Endothelial cell of umbilical vein (primary cell): ENCODE measurements at regions of chr9 and their contacts with region 1.

Region 1: GRCh38 chr9:88388172-88388885 is at the start of gene SPIN1:
- DNase-seq: peak; percentile 66
- H3K4me3 ChIP-seq: peak within 1 kb of the TSS; percentile 83 to 98 (median 85)
- H3K27ac ChIP-seq: peak within 1 kb of the TSS; percentile 82
- H3K4me1 ChIP-seq: peaks cover 16% of the 10 kb centered on the region
- H3K27me3 ChIP-seq: no peaks in the 10 kb centered on the region
- CTCF ChIP-seq: peak; percentile 28 to 49
- POLR2A ChIP-seq: peak; percentile 81
- total RNA-seq, gene SPIN1: 56.8 and 58.4 TPM in 2 replicates

Region 2: GRCh38 chr9:87950765-87951488 is 437.4 kb before region 1 on chr9:
- CTCF ChIA-PET with region 1: no interaction called
- POLR2A ChIA-PET with region 1: no interaction called
- dilution Hi-C with region 1: no loop called
- intact Hi-C with region 1: loop called (anchors 5 kb)
- DNase-seq: peak; percentile 32
- H3K4me3 ChIP-seq: no peak overlapping the region
- H3K27ac ChIP-seq: no peak overlapping the region
- H3K4me1 ChIP-seq: no peaks in the 10 kb centered on the region
- H3K27me3 ChIP-seq: peaks cover 0 to 2% of the 10 kb centered on the region in 2 experiments
- CTCF ChIP-seq: peak; percentile 31 to 50
- POLR2A ChIP-seq: no peak

Region 3: GRCh38 chr9:88173378-88173999 is 214.8 kb before region 1 on chr9:
- CTCF ChIA-PET with region 1: no interaction called
- POLR2A ChIA-PET with region 1: no interaction called
- dilution Hi-C with region 1: no loop called
- intact Hi-C with region 1: loop called (anchors 1 kb)
- DNase-seq: peak; percentile 74
- H3K4me3 ChIP-seq: no peak overlapping the region
- H3K27ac ChIP-seq: no peak overlapping the region
- H3K4me1 ChIP-seq: no peaks in the 10 kb centered on the region
- H3K27me3 ChIP-seq: no peaks in the 10 kb centered on the region
- CTCF ChIP-seq: peak; percentile 79 to 84
- POLR2A ChIP-seq: no peak

Region 4: GRCh38 chr9:88272986-88273385 is 115.3 kb before region 1 on chr9:
- CTCF ChIA-PET with region 1: no interaction called
- POLR2A ChIA-PET with region 1: no interaction called
- dilution Hi-C with region 1: no loop called
- intact Hi-C with region 1: loop called (anchors 2 kb)
- DNase-seq: no peak
- H3K4me3 ChIP-seq: no peak overlapping the region
- H3K27ac ChIP-seq: no peak overlapping the region
- H3K4me1 ChIP-seq: peaks cover 3% of the 10 kb centered on the region
- H3K27me3 ChIP-seq: no peaks in the 10 kb centered on the region
- CTCF ChIP-seq: no peak
- POLR2A ChIP-seq: no peak

Region 5: GRCh38 chr9:88578121-88579054 is 190.1 kb after region 1 on chr9:
- CTCF ChIA-PET with region 1: no interaction called
- POLR2A ChIA-PET with region 1: no interaction called
- dilution Hi-C with region 1: no loop called
- intact Hi-C with region 1: loop called (anchors 1 kb)
- DNase-seq: peak; percentile 69
- H3K4me3 ChIP-seq: no peak overlapping the region
- H3K27ac ChIP-seq: no peak overlapping the region
- H3K4me1 ChIP-seq: peaks cover under 1% of the 10 kb centered on the region
- H3K27me3 ChIP-seq: no peaks in the 10 kb centered on the region
- CTCF ChIP-seq: peak; percentile 94 to 96
- POLR2A ChIP-seq: no peak

Region 6: DNA sequence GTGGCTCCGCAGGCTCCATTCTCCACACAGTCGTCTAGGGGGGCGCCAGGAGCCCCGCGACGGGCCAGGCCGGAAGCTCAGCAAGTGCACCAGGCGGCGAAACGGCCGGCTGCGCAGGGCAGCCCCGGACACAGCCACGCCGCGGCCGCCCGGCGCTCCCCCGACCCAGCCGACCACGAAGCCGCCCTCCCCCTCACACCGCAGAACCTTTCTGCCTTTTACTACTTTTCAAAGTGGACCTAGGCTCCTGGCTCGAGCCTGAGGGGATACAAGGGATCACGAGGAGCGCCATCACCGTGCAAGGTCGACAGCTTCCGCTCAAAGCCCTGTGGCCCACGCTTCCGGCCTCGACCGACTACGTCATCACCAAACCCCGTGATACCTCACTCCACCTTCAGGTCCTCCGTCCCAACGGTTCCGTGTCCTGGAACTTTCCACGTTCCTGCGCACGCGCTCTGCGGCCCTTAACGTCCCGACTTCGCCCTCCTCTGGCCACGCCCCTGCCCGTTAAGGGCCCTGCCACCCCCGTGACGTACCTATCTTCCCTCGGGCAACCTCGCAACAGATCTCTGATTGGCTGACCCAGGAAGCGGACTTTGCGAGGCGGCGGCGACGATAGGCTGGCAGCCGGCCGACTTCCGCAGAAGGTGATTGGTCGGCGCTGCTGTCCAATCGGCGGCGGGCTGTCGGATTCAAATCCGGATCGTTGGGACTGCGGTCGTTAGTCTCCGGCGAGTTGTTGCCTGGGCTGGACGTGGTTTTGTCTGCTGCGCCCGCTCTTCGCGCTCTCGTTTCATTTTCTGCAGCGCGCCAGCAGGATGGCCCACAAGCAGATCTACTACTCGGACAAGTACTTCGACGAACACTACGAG is 922.4 kb after region 1 on chr9 and contains the start of gene CKS2:
- CTCF ChIA-PET with region 1: no interaction called
- POLR2A ChIA-PET with region 1: no interaction called
- dilution Hi-C with region 1: no loop called
- intact Hi-C with region 1: loop called (anchors 5 kb)
- DNase-seq: peak; percentile 100
- H3K4me3 ChIP-seq: peak within 1 kb of the TSS; percentile 70 to 98 (median 97)
- H3K27ac ChIP-seq: peak within 1 kb of the TSS; percentile 98
- H3K4me1 ChIP-seq: peaks cover 28% of the 10 kb centered on the region
- H3K27me3 ChIP-seq: no peaks in the 10 kb centered on the region
- CTCF ChIP-seq: no peak
- POLR2A ChIP-seq: peak; percentile 95
- total RNA-seq, gene CKS2: 149 and 153 TPM in 2 replicates